ENCODE measurements at regions of chr2 and their contacts with region 1.

Region 1: GRCh38 chr2:190849774-190850173 is 30.8 kb upstream of the GLS start:
- DNase-seq: no peak
- H3K4me3 Mint-ChIP-seq: no peak overlapping the region
- H3K27ac Mint-ChIP-seq: no peak overlapping the region
- H3K4me1 Mint-ChIP-seq: peaks cover 19% of the 10 kb centered on the region
- H3K27me3 Mint-ChIP-seq: no peaks in the 10 kb centered on the region

Region 2: DNA sequence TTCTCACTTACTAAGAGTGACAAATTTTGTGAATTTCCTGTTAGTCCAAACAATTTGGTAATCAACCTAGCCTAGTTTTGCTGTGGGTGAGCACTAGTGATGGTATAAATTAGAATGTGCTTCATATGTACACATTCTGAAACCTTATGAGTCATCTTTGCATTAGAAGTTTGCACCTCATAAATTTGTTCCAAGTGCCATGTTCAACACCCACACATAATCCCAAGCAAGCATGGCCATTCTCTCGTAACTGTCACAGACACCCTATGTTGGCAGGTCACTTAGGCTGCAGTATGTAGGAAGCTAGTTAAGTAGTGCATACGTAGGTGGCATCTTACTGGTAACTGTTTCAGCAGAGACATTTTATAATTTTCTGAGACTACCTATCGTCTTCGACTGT is 154.0 kb before region 1 on chr2:
- CTCF ChIA-PET with region 1: no interaction called
- intact Hi-C with region 1: no loop called
- DNase-seq: peak; percentile 55
- H3K4me3 Mint-ChIP-seq: no peak overlapping the region
- H3K27ac Mint-ChIP-seq: no peak overlapping the region
- H3K4me1 Mint-ChIP-seq: peaks cover 23% of the 10 kb centered on the region
- H3K27me3 Mint-ChIP-seq: no peaks in the 10 kb centered on the region

Region 3: DNA sequence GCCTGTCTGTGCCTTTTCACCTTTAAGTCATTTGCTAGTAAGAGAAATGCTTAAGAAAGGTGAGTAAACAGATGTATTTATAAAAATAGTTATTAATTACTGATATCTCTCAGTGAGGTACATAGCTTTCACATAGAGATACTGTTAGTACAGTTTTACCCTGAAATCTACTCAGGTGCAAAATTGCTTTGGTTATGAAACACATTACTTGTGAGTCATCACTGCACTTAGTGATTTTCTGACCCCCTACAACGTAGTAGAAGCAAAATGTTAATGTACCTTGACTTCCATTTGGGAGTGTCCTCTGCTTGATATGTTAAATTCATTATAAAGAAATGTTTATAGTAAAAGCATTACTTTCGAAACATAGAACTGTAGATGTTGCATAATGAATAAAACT is 37.3 kb after region 1 on chr2:
- CTCF ChIA-PET with region 1: interaction called, 29 read pairs
- intact Hi-C with region 1: loop called (anchors 1 kb)
- DNase-seq: no peak
- H3K4me3 Mint-ChIP-seq: no peak overlapping the region
- H3K27ac Mint-ChIP-seq: no peak overlapping the region
- H3K4me1 Mint-ChIP-seq: peaks cover 66% of the 10 kb centered on the region
- H3K27me3 Mint-ChIP-seq: no peaks in the 10 kb centered on the region

Region 4: DNA sequence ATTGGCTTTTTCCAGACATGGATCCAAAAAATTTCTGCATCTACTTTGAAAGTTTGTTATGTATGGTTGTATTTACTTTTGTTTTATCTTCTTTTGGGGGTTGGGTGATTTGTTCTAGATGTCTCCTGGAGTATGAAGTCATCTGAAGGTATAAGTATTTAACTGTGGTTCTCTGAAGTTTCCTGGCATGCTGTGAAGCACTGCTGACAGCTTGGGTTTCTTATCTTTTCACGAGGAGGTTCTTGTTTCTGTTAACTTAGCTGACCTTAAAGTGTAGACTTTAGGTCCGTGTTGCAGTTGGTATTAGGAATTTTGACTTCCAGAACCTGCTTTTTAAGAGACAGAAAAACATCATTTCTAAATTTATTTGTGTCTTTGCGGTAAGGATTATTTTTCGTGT is 46.7 kb after region 1 on chr2:
- CTCF ChIA-PET with region 1: interaction called, 10 read pairs
- intact Hi-C with region 1: no loop called
- DNase-seq: no peak
- H3K4me3 Mint-ChIP-seq: no peak overlapping the region
- H3K27ac Mint-ChIP-seq: peak overlapping the region; percentile 3
- H3K4me1 Mint-ChIP-seq: peaks cover 28% of the 10 kb centered on the region
- H3K27me3 Mint-ChIP-seq: no peaks in the 10 kb centered on the region

Region 5: GRCh38 chr2:190947711-190948251 is 98.0 kb after region 1 on chr2:
- CTCF ChIA-PET with region 1: interaction called, 36 read pairs
- intact Hi-C with region 1: loop called (anchors 1 kb)
- DNase-seq: peak; percentile 42
- H3K4me3 Mint-ChIP-seq: no peak overlapping the region
- H3K27ac Mint-ChIP-seq: peak overlapping the region; percentile 32
- H3K4me1 Mint-ChIP-seq: peaks cover 7% of the 10 kb centered on the region
- H3K27me3 Mint-ChIP-seq: no peaks in the 10 kb centered on the region

Region 6: GRCh38 chr2:191030521-191031154 is 180.9 kb after region 1 on chr2:
- CTCF ChIA-PET with region 1: interaction called, 4 read pairs
- intact Hi-C with region 1: loop called (anchors 1 kb)
- DNase-seq: peak; percentile 59
- H3K4me3 Mint-ChIP-seq: no peak overlapping the region
- H3K27ac Mint-ChIP-seq: peak overlapping the region; percentile 44
- H3K4me1 Mint-ChIP-seq: peaks cover 48% of the 10 kb centered on the region
- H3K27me3 Mint-ChIP-seq: no peaks in the 10 kb centered on the region

Measured in activated naive CD4-positive, alpha-beta T cell treated with anti-CD3 and anti-CD28 coated beads for 36 hours (primary cell).